IMR-90 (cell line): ENCODE measurements at regions of chr9 and their contacts with region 1.

Region 1: GRCh38 chr9:122453677-122454135 is 24.0 kb downstream of the OR1J1 start:
- DNase-seq: peak; percentile 55
- ATAC-seq: peak; percentile 28
- H3K4me3 ChIP-seq: no peak overlapping the region
- H3K27ac ChIP-seq: no peak overlapping the region
- H3K4me1 ChIP-seq: no peaks in the 10 kb centered on the region; the same call in 1 of the 2 replicates
- H3K27me3 ChIP-seq: no peaks in the 10 kb centered on the region; the same call in 1 of the 2 replicates
- CTCF ChIP-seq: no peak
- POLR2A ChIP-seq: no peak
- RAD21 ChIP-seq: no peak

Region 2: DNA sequence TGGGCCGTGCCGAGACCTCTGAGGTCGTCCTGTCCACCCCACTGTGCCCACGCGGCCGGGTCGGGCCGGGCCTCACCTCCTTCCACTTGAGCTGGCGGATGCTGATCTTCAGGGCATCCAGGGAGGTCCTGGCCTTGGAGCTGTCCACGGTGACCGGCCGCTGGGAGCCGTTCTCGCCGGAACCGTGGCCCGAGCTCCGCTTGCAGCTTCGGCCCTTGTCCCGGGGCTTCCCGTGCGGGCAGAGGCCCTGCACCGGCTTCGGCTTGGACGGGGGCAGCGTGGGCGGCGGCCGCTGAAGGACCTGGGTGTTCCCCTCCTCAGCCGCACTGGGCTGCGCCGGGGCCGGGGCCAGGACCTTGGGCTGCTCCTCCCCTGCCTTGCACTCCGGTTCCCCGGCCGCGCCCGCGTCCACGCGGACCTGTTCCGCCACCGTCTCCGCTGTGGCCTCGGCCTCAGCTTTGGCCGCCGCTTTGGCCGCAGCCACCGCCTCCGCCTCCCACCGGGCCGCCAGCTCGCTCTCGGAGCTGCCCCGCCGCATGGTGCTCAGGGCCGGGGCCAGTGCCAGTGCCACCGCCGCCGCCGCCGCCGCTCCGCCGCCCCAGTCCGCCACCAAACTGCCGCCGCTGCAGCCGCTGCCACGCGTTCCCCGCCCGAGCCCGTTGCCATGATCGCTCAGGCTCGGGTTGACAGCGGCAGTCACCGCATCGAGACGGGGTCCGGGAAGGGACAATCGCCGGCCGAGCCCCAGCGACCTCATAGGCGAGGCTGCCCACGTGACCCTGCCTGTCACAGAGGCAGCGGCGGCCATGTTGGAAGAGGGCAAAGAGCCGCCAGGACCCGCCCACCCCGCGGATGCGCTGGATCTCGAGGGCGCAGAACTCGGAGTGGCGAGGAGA is 360.8 kb before region 1 on chr9 and contains the start of gene TTLL11:
- CTCF ChIA-PET with region 1: no interaction called
- POLR2A ChIA-PET with region 1: no interaction called
- dilution Hi-C with region 1: no loop called
- in situ Hi-C with region 1: loop called (anchors 10 kb)
- intact Hi-C with region 1: loop called (anchors 10 kb)
- DNase-seq: peak; percentile 91
- ATAC-seq: peak; percentile 89
- H3K4me3 ChIP-seq: peak within 1 kb of the TSS; percentile 56
- H3K27ac ChIP-seq: peak within 1 kb of the TSS; percentile 46
- H3K4me1 ChIP-seq: peaks cover 9% of the 10 kb centered on the region
- H3K27me3 ChIP-seq: no peaks in the 10 kb centered on the region; the same call in none of the 2 replicates
- CTCF ChIP-seq: no peak
- POLR2A ChIP-seq: no peak
- RAD21 ChIP-seq: no peak
- total RNA-seq, gene TTLL11: 2.0 and 2.5 TPM in 2 replicates

Region 3: GRCh38 chr9:122125158-122125508 is 328.6 kb before region 1 on chr9:
- CTCF ChIA-PET with region 1: interaction called, 9 read pairs
- POLR2A ChIA-PET with region 1: no interaction called
- dilution Hi-C with region 1: no loop called
- in situ Hi-C with region 1: loop called (anchors 5 kb)
- intact Hi-C with region 1: loop called (anchors 1 kb)
- DNase-seq: peak; percentile 76
- ATAC-seq: peak; percentile 79
- H3K4me3 ChIP-seq: no peak overlapping the region
- H3K27ac ChIP-seq: no peak overlapping the region
- H3K4me1 ChIP-seq: peaks cover 13% of the 10 kb centered on the region
- H3K27me3 ChIP-seq: no peaks in the 10 kb centered on the region; the same call in 1 of the 2 replicates
- CTCF ChIP-seq: peak; percentile 99
- POLR2A ChIP-seq: peak; percentile 70; the same call in 1 of the 2 replicates
- RAD21 ChIP-seq: peak; percentile 99

Region 4: GRCh38 chr9:122264360-122265148 is 189.2 kb before region 1 on chr9 and contains the starts of genes MRRF and RBM18:
- CTCF ChIA-PET with region 1: no interaction called
- POLR2A ChIA-PET with region 1: no interaction called
- dilution Hi-C with region 1: no loop called
- in situ Hi-C with region 1: no loop called
- intact Hi-C with region 1: loop called (anchors 5 kb)
- DNase-seq: peak; percentile 91
- ATAC-seq: peak; percentile 92
- H3K4me3 ChIP-seq: peak within 1 kb of the TSS; percentile 72
- H3K27ac ChIP-seq: peak within 1 kb of the TSS; percentile 99
- H3K4me1 ChIP-seq: no peaks in the 10 kb centered on the region; the same call in 1 of the 2 replicates
- H3K27me3 ChIP-seq: no peaks in the 10 kb centered on the region
- CTCF ChIP-seq: 0 out of 2 replicates have a peak, but pooled peaks have one; percentile 15
- POLR2A ChIP-seq: peak; percentile 80
- RAD21 ChIP-seq: peak; percentile 8; the same call in 1 of the 2 replicates
- total RNA-seq, gene MRRF: 35.8 and 38.0 TPM in 2 replicates
- total RNA-seq, gene RBM18: 8.1 and 8.4 TPM in 2 replicates

Region 5: GRCh38 chr9:122356627-122357026 is 97.1 kb before region 1 on chr9:
- CTCF ChIA-PET with region 1: interaction called, 4 read pairs
- POLR2A ChIA-PET with region 1: no interaction called
- dilution Hi-C with region 1: no loop called
- in situ Hi-C with region 1: loop called (anchors 5 kb)
- intact Hi-C with region 1: loop called (anchors 2 kb)
- DNase-seq: no peak
- ATAC-seq: 0 out of 2 replicates have a peak, but pooled peaks have one; percentile 38
- H3K4me3 ChIP-seq: no peak overlapping the region
- H3K27ac ChIP-seq: no peak overlapping the region
- H3K4me1 ChIP-seq: peaks cover 12% of the 10 kb centered on the region
- H3K27me3 ChIP-seq: no peaks in the 10 kb centered on the region
- CTCF ChIP-seq: peak; percentile 23; the same call in 1 of the 2 replicates
- POLR2A ChIP-seq: no peak
- RAD21 ChIP-seq: no peak

Region 6: GRCh38 chr9:122506964-122507363 is 53.3 kb after region 1 on chr9:
- CTCF ChIA-PET with region 1: no interaction called
- POLR2A ChIA-PET with region 1: no interaction called
- dilution Hi-C with region 1: no loop called
- in situ Hi-C with region 1: no loop called
- intact Hi-C with region 1: no loop called
- DNase-seq: no peak
- ATAC-seq: no peak
- H3K4me3 ChIP-seq: no peak overlapping the region
- H3K27ac ChIP-seq: no peak overlapping the region
- H3K4me1 ChIP-seq: no peaks in the 10 kb centered on the region
- H3K27me3 ChIP-seq: peaks cover 11% of the 10 kb centered on the region
- CTCF ChIP-seq: no peak
- POLR2A ChIP-seq: no peak
- RAD21 ChIP-seq: no peak